ENCODE measurements at regions of chr17 and their contacts with region 1.

Region 1: GRCh38 chr17:80575057-80575875 is 30.6 kb downstream of the RPTOR start:
- DNase-seq: peak; percentile 90
- ATAC-seq: peak; percentile 100
- H3K4me3 ChIP-seq: no peak overlapping the region
- H3K4me3 Mint-ChIP-seq: no peak overlapping the region
- H3K27ac ChIP-seq: no peak overlapping the region
- H3K27ac Mint-ChIP-seq: no peak overlapping the region
- H3K4me1 ChIP-seq: no peaks in the 10 kb centered on the region
- H3K4me1 Mint-ChIP-seq: peaks cover 10% of the 10 kb centered on the region
- H3K27me3 ChIP-seq: no peaks in the 10 kb centered on the region
- H3K27me3 Mint-ChIP-seq: no peaks in the 10 kb centered on the region
- CTCF ChIP-seq: peak; percentile 100

Region 2: DNA sequence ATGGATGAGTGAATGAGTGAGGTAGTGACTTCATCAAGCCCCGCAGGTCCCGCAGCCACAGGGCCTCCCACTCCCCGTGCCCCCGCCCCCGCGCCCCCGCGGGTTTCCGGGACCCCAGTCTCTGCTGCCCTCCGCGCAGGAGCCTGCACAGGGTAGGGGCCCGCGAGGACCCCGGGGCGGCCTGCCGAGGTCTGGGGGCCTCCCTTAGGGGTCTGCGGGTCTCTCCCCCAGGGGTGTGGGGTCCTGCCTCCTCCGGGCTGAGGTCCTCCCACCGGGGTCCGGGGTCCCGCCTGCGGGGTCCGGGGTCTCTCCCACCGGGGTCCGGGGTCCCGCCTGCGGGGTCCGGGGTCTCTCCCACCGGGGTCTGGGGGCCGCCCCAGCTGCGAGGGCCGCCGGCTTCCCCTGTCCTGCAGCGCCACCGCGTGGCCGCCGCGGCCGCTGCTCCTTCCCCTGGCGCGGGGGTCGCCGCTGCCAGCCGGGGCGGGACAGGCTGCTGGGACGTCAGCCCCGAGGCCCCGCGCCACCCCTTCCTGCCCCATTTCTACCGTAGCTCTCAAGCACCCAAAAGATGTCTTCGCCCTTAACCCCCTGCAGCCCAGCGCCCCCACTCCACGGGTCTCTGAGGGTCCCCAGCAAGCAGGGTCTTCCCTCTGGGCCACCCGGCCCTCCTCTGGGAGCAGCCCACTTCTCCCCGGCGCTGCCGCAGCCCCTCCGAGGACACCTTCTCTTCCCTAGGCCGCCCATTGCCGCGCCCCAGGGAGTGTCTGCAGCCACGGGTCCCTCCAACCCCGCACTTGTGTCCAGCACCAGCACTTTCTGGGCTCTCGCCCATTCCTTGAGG is 406.0 kb after region 1 on chr17:
- CTCF ChIA-PET with region 1: interaction called, 7 read pairs
- POLR2A ChIA-PET with region 1: no interaction called
- intact Hi-C with region 1: loop called (anchors 5 kb)
- DNase-seq: peak; percentile 67
- ATAC-seq: peak; percentile 72
- H3K4me3 ChIP-seq: peak overlapping the region in 2 of 5 experiments; percentile 2 to 23
- H3K4me3 Mint-ChIP-seq: peak overlapping the region; percentile 69
- H3K27ac ChIP-seq: no peak overlapping the region
- H3K27ac Mint-ChIP-seq: no peak overlapping the region
- H3K4me1 ChIP-seq: peaks cover 12 to 17% of the 10 kb centered on the region in 2 donors
- H3K4me1 Mint-ChIP-seq: peaks cover 12% of the 10 kb centered on the region
- H3K27me3 ChIP-seq: no peaks in the 10 kb centered on the region
- H3K27me3 Mint-ChIP-seq: peaks cover 9% of the 10 kb centered on the region
- CTCF ChIP-seq: peak; percentile 94

Region 3: DNA sequence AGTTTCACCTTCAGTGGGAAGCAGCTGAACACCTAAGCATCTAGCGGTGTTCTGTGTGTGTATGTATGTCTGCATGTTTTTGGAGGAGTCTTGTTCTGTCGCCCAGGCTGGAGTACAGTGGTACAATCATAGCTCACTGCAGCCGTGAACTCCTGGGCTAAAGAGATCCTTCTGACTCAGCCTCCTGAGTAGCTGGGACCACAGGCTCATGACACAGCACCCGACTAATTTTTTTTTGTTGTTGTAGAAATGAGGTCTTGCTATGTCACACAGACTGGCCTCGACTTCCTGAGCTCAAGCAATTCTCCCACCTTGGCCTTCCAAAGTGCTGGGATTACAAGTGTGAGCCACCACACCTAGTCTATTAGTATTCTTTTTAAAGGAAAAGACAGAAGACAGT is 1007.1 kb after region 1 on chr17:
- CTCF ChIA-PET with region 1: no interaction called
- POLR2A ChIA-PET with region 1: no interaction called
- intact Hi-C with region 1: no loop called
- DNase-seq: no peak
- ATAC-seq: no peak
- H3K4me3 ChIP-seq: no peak overlapping the region
- H3K4me3 Mint-ChIP-seq: no peak overlapping the region
- H3K27ac ChIP-seq: no peak overlapping the region
- H3K27ac Mint-ChIP-seq: no peak overlapping the region
- H3K4me1 ChIP-seq: peaks cover 0 to 7% of the 10 kb centered on the region in 2 donors
- H3K4me1 Mint-ChIP-seq: peaks cover 13% of the 10 kb centered on the region
- H3K27me3 ChIP-seq: no peaks in the 10 kb centered on the region
- H3K27me3 Mint-ChIP-seq: no peaks in the 10 kb centered on the region
- CTCF ChIP-seq: no peak

Measured in B cell (primary cell).